Caco-2 (cell line): ENCODE measurements at regions of chr11 and their contacts with region 1.

Region 1: GRCh38 chr11:113670149-113670830 is 35.8 kb downstream of the TMPRSS5 start:
- DNase-seq: peak; percentile 77 to 87
- H3K4me3 ChIP-seq: no peak overlapping the region
- H3K4me3 Mint-ChIP-seq: peak overlapping the region; percentile 28
- H3K27ac Mint-ChIP-seq: peak overlapping the region; percentile 99
- H3K4me1 ChIP-seq: peaks cover 82% of the 10 kb centered on the region
- H3K4me1 Mint-ChIP-seq: peaks cover 56% of the 10 kb centered on the region
- H3K27me3 ChIP-seq: no peaks in the 10 kb centered on the region
- H3K27me3 Mint-ChIP-seq: no peaks in the 10 kb centered on the region
- CTCF ChIP-seq: no peak

Region 2: GRCh38 chr11:113314389-113315301 is 355.6 kb before region 1 on chr11 and contains the start of gene TTC12:
- CTCF ChIA-PET with region 1: no interaction called
- POLR2A ChIA-PET with region 1: no interaction called
- intact Hi-C with region 1: loop called (anchors 2 kb)
- DNase-seq: peak; percentile 97 to 99
- H3K4me3 ChIP-seq: peak within 1 kb of the TSS; percentile 72
- H3K4me3 Mint-ChIP-seq: peak within 1 kb of the TSS; percentile 70
- H3K27ac Mint-ChIP-seq: peak within 1 kb of the TSS; percentile 35
- H3K4me1 ChIP-seq: peaks cover 10% of the 10 kb centered on the region
- H3K4me1 Mint-ChIP-seq: peaks cover 6% of the 10 kb centered on the region
- H3K27me3 ChIP-seq: no peaks in the 10 kb centered on the region
- H3K27me3 Mint-ChIP-seq: no peaks in the 10 kb centered on the region
- CTCF ChIP-seq: no peak
- total RNA-seq, gene TTC12: 19.4 and 20.8 TPM in 2 replicates

Region 3: GRCh38 chr11:113540416-113541330 is 129.6 kb before region 1 on chr11:
- CTCF ChIA-PET with region 1: interaction called, 3 read pairs
- POLR2A ChIA-PET with region 1: interaction called, 4 read pairs
- intact Hi-C with region 1: loop called (anchors 1 kb)
- DNase-seq: no peak
- H3K4me3 ChIP-seq: no peak overlapping the region
- H3K4me3 Mint-ChIP-seq: no peak overlapping the region
- H3K27ac Mint-ChIP-seq: peak overlapping the region; percentile 40
- H3K4me1 ChIP-seq: peaks cover 35% of the 10 kb centered on the region
- H3K4me1 Mint-ChIP-seq: peaks cover 43% of the 10 kb centered on the region
- H3K27me3 ChIP-seq: no peaks in the 10 kb centered on the region
- H3K27me3 Mint-ChIP-seq: no peaks in the 10 kb centered on the region
- CTCF ChIP-seq: peak; percentile 9 to 26

Region 4: GRCh38 chr11:113571531-113571930 is 98.8 kb before region 1 on chr11:
- CTCF ChIA-PET with region 1: no interaction called
- POLR2A ChIA-PET with region 1: no interaction called
- intact Hi-C with region 1: loop called (anchors 1 kb)
- DNase-seq: no peak
- H3K4me3 ChIP-seq: no peak overlapping the region
- H3K4me3 Mint-ChIP-seq: no peak overlapping the region
- H3K27ac Mint-ChIP-seq: peak overlapping the region; percentile 65
- H3K4me1 ChIP-seq: peaks cover 59% of the 10 kb centered on the region
- H3K4me1 Mint-ChIP-seq: peaks cover 42% of the 10 kb centered on the region
- H3K27me3 ChIP-seq: no peaks in the 10 kb centered on the region
- H3K27me3 Mint-ChIP-seq: no peaks in the 10 kb centered on the region
- CTCF ChIP-seq: no peak